Dorsolateral prefrontal cortex (tissue), 120 donors: ENCODE measurements at regions of chr12 and their contacts with region 1.

Region 1: DNA sequence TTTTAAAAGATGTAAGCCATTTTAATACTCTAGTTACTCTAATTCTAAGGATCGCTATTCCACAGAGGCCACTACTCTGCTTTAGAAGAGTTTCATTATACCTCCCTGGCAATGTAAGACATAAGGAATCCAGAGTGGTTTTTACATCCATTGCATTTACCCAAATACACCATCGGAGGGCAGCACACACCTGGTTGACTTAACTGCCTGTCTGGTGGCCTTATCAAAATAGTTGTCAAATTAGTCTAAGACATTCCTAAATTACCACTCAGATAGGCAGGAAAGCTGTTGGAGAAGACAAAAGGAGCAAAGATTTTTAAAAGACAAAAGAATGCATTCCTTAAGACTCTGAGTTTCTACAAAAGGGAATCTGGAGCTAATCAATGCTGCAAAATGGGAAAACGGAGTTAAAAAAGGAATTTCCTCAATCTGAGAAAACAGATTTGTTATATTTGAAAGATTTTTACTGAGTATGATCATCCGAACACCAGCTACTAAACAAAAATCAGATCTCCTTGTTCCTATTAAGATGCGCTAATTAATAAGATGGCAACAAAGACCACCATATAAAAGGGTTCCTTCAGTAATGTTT is 33.8 kb upstream of the FGD4 start:
- DNase-seq: peak in 5 of 10 donors; percentile 26 to 63 (median 45)
- H3K4me3 ChIP-seq: no peak overlapping the region
- H3K27ac ChIP-seq: no peak overlapping the region
- H3K27me3 ChIP-seq: no peaks in the 10 kb centered on the region
- CTCF ChIP-seq: peak; percentile 59 to 89 (median 78)

Region 2: GRCh38 chr12:32002848-32003493 is 362.6 kb before region 1 on chr12:
- intact Hi-C with region 1: no loop called
- DNase-seq: no peak
- H3K4me3 ChIP-seq: no peak overlapping the region
- H3K27ac ChIP-seq: peak overlapping the region in 6 of 59 donors; percentile 0 to 20 (median 4)
- H3K27me3 ChIP-seq: no peaks in the 10 kb centered on the region
- CTCF ChIP-seq: no peak

Region 3: DNA sequence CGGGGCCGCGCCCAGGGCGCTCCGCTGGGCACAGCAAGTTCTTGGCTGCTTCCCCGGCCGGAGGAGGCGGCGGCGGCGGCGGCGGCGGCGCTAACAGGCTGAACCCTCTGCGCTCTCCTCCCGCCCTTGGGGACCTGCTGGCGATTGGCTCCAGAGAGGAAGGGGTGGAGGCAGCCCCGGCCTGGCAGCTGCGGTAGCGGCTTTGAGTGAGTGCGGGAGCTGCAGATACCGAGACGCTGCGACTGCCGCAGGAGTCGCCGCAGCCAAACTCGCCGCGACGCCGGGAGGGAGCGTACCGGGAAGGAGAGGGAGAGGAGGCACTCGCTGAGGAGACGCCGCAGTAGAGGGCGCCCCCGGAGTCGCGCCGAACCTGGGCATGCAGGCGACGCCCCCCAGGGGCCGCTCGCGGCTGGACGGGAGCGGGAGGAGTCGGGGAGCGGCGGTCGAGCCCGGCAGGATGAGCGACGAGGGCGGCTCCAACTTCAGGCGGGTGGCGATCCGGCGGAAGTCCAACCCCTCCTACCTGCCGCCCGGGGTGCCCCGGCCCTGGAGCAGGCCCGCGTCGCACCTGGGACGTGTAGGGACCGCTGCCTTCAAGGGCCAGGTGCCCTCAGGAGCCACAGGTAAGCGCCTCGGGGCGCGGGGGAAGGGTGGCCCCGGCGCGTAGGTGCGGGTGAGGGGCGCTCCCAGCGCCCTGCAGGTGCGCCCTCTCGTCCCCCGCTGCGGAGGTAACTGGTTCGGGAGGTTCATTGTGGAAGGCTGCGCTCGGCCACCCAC is 34.0 kb after region 1 on chr12 and contains the start of gene FGD4:
- intact Hi-C with region 1: no loop called
- DNase-seq: peak; percentile 56 to 83 (median 76)
- H3K4me3 ChIP-seq: peak within 1 kb of the TSS; percentile 48 to 87 (median 78)
- H3K27ac ChIP-seq: peak within 1 kb of the TSS in 39 of 59 donors; percentile 1 to 87 (median 40)
- H3K27me3 ChIP-seq: no peaks in the 10 kb centered on the region
- CTCF ChIP-seq: peak in 49 of 56 donors; percentile 17 to 60 (median 40)
- total RNA-seq, gene FGD4: 23.1 to 59.4 (median 37.2) TPM

Region 4: DNA sequence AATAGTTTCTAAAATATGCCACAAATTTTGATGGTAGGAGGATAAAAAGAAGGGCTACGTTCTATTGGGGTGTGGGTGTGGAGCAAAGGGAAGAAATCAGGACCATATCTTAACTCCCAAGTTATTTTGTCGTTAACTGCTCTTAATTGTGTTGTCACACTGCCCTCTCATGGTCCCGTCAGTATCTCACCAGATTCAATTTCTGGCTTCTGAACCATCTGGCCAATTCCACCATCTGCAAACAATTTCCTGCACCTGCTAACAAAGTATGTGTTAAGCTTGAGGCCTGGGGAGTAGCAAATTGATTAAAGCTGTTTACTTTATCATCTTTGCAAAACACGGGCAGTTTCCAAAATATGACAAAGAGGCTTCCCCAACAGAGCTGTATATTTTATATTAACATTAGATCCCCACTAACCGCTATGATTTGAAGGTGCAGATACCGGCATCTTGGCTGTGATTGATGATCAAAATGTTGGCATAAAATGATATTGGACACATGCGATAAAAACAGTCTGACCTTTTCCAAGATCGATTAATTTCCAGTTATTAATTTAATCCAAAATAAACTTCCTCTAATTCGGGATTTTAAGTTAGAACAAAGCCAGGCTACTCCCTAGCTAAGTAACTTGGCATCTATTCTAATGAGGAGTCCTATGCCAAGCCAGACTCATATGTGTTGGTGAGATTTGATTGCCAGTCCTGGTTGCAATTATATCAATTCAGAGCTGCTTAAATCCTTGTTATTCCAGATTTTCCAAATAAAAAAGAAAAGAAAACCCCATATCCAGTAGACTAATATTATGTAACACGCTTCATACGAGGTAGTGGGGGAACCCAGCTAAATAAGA is 306.6 kb after region 1 on chr12:
- intact Hi-C with region 1: loop called (anchors 5 to 10 kb)
- DNase-seq: peak in 4 of 10 donors; percentile 18 to 75 (median 45)
- H3K4me3 ChIP-seq: no peak overlapping the region
- H3K27ac ChIP-seq: peak overlapping the region in 1 of 59 donors; percentile 9
- H3K27me3 ChIP-seq: no peaks in the 10 kb centered on the region
- CTCF ChIP-seq: peak; percentile 42 to 84 (median 68)